CD8-positive, alpha-beta T cell (primary cell): ENCODE measurements at regions of chr7 and their contacts with region 1.

Region 1: DNA sequence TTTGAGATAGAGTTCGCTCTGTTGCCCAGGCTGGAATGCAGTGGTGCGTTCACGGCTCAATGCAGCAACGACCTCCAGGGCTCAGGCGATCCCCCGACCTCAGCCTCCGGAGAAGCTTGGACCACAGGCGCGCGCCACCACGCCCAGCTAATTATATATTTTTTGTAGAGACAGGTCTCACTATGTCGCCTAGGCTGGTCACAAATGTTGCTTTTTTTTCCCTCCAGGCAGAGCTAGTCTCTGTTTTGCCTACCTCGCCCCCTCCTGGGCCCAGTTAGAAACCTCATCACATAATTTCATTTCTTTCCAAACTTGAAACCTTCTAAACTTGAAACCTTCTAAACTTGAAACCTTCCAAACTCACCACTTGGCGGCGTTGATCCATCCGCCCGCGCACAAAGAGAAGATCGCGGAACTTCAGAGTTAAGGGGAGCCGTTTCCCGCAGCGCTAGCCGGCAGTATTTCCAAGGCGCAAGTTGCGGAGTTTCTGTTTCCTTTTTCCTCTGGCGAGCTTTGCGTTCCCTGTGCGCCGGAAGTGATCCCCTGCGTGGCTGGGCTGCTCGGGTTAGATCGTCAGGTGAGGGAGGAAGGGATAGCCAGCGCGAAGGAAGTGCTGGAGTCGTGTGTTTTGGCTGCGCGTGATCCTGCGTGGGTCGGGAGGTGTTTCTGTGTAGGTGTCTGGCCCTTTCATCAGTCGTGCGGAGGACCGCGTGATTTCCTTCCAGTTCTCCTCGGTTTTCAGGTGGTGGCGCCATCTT is at the start of gene SSBP1:
- DNase-seq: peak; percentile 84 to 98 (median 90)
- ATAC-seq: peak; percentile 84
- H3K4me3 ChIP-seq: peak within 1 kb of the TSS; percentile 63 to 83
- H3K4me3 Mint-ChIP-seq: peak within 1 kb of the TSS; percentile 99
- H3K27ac ChIP-seq: peak within 1 kb of the TSS; percentile 77 to 81
- H3K27ac Mint-ChIP-seq: peak within 1 kb of the TSS; percentile 99
- H3K4me1 ChIP-seq: peaks cover 30% of the 10 kb centered on the region
- H3K4me1 Mint-ChIP-seq: peaks cover 45% of the 10 kb centered on the region
- H3K27me3 ChIP-seq: no peaks in the 10 kb centered on the region
- H3K27me3 Mint-ChIP-seq: no peaks in the 10 kb centered on the region
- CTCF ChIP-seq: peak; percentile 85
- total RNA-seq, gene SSBP1: 107 TPM

Region 2: GRCh38 chr7:140924019-140924820 is 813.8 kb before region 1 on chr7:
- CTCF ChIA-PET with region 1: no interaction called
- POLR2A ChIA-PET with region 1: no interaction called
- intact Hi-C with region 1: loop called (anchors 10 kb)
- DNase-seq: peak; percentile 55 to 95 (median 75)
- ATAC-seq: peak; percentile 65
- H3K4me3 ChIP-seq: peak overlapping the region; percentile 93
- H3K4me3 Mint-ChIP-seq: no peak overlapping the region
- H3K27ac ChIP-seq: peak overlapping the region; percentile 96 to 97
- H3K27ac Mint-ChIP-seq: no peak overlapping the region
- H3K4me1 ChIP-seq: peaks cover 13% of the 10 kb centered on the region
- H3K4me1 Mint-ChIP-seq: peaks cover 15% of the 10 kb centered on the region
- H3K27me3 ChIP-seq: no peaks in the 10 kb centered on the region
- H3K27me3 Mint-ChIP-seq: no peaks in the 10 kb centered on the region
- CTCF ChIP-seq: no peak

Region 3: GRCh38 chr7:141654551-141654950 is 83.5 kb before region 1 on chr7:
- CTCF ChIA-PET with region 1: interaction called, 30 read pairs
- POLR2A ChIA-PET with region 1: interaction called, 6 read pairs
- intact Hi-C with region 1: loop called (anchors 1 kb)
- DNase-seq: peak; percentile 17 to 83 (median 61)
- ATAC-seq: peak; percentile 96
- H3K4me3 ChIP-seq: no peak overlapping the region
- H3K4me3 Mint-ChIP-seq: no peak overlapping the region
- H3K27ac ChIP-seq: no peak overlapping the region
- H3K27ac Mint-ChIP-seq: peak overlapping the region; percentile 58
- H3K4me1 ChIP-seq: no peaks in the 10 kb centered on the region
- H3K4me1 Mint-ChIP-seq: peaks cover 6% of the 10 kb centered on the region
- H3K27me3 ChIP-seq: no peaks in the 10 kb centered on the region
- H3K27me3 Mint-ChIP-seq: no peaks in the 10 kb centered on the region
- CTCF ChIP-seq: peak; percentile 72

Region 4: GRCh38 chr7:141710301-141710700 is 27.7 kb before region 1 on chr7:
- CTCF ChIA-PET with region 1: interaction called, 22 read pairs
- POLR2A ChIA-PET with region 1: interaction called, 14 read pairs
- intact Hi-C with region 1: no loop called
- DNase-seq: peak in 3 of 9 experiments; percentile 22 to 39 (median 34)
- ATAC-seq: peak; percentile 44
- H3K4me3 ChIP-seq: no peak overlapping the region
- H3K4me3 Mint-ChIP-seq: no peak overlapping the region
- H3K27ac ChIP-seq: no peak overlapping the region
- H3K27ac Mint-ChIP-seq: no peak overlapping the region
- H3K4me1 ChIP-seq: no peaks in the 10 kb centered on the region
- H3K4me1 Mint-ChIP-seq: peaks cover 3% of the 10 kb centered on the region
- H3K27me3 ChIP-seq: no peaks in the 10 kb centered on the region
- H3K27me3 Mint-ChIP-seq: no peaks in the 10 kb centered on the region
- CTCF ChIP-seq: peak; percentile 14

Region 5: DNA sequence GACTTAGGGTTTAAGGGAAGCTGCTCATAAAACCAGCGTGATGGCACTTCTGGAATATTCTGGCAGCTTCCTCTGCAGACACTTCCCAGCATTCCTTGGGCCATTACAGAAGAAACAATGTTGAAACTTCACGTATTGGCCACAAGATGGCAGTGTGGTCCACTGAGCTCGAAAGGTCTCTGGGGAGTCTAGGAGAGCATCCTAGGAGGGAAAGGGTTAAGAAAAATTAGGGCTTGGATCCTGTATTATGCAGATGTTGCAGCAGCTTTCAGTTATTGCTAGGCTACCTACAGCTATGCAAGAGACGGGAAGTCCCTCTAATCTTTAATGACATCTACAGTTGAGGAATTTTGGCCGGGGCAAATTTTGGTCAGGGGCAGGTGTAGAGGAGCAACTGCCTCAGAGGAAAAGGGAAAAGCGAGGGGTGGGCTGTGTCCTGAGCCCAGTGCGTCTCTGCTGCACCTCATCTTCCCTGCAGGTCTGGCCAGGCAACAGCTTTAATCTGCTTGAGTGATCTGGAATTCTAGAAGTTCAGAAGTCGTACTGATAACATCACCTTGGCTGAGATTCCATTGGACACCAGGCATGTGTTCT is 740.6 kb after region 1 on chr7:
- CTCF ChIA-PET with region 1: no interaction called
- POLR2A ChIA-PET with region 1: no interaction called
- intact Hi-C with region 1: loop called in 1 of 2 experiments (anchors 5 kb)
- DNase-seq: peak in 3 of 9 experiments; percentile 32 to 67 (median 56)
- ATAC-seq: peak; percentile 39
- H3K4me3 ChIP-seq: no peak overlapping the region
- H3K4me3 Mint-ChIP-seq: no peak overlapping the region
- H3K27ac ChIP-seq: no peak overlapping the region
- H3K27ac Mint-ChIP-seq: peak overlapping the region; percentile 53
- H3K4me1 ChIP-seq: peaks cover 80% of the 10 kb centered on the region
- H3K4me1 Mint-ChIP-seq: peaks cover 80% of the 10 kb centered on the region
- H3K27me3 ChIP-seq: no peaks in the 10 kb centered on the region
- H3K27me3 Mint-ChIP-seq: no peaks in the 10 kb centered on the region
- CTCF ChIP-seq: peak; percentile 68